ENCODE measurements at regions of chr1 and their contacts with region 1.

Region 1: GRCh38 chr1:117481410-117481809 is 114.2 kb downstream of the MAN1A2 start:
- DNase-seq: no peak
- ATAC-seq: no peak
- H3K4me3 ChIP-seq: no peak overlapping the region
- H3K27ac ChIP-seq: no peak overlapping the region
- H3K4me1 ChIP-seq: no peaks in the 10 kb centered on the region
- H3K27me3 ChIP-seq: no peaks in the 10 kb centered on the region
- CTCF ChIP-seq: no peak
- EP300 ChIP-seq: no peak
- POLR2A ChIP-seq: no peak
- RAD21 ChIP-seq: no peak

Region 2: DNA sequence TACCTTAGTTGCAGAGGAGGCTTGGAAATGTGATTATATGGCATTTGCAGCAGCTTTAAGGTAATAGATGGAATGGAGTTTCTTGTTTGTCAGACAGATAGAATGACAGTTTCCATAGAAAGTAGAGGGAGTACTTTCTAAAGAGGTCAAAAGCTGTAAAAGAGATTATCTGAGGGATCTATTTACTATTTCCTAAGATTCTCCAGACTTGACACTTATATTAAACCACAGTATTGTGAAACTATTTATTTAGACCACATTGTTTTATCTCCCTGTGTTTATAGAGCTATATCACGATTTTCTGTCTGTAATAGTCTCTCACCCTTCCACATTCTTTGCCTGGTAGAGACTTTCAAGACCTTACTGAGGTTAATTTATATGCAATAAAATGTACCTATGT is 47.5 kb before region 1 on chr1:
- CTCF ChIA-PET with region 1: no interaction called
- POLR2A ChIA-PET with region 1: no interaction called
- RAD21 ChIA-PET with region 1: no interaction called
- SMC1A ChIA-PET with region 1: no interaction called
- in situ Hi-C with region 1: no loop called
- intact Hi-C with region 1: loop called (anchors 5 kb)
- DNase-seq: no peak
- ATAC-seq: no peak
- H3K4me3 ChIP-seq: no peak overlapping the region
- H3K27ac ChIP-seq: no peak overlapping the region
- H3K4me1 ChIP-seq: no peaks in the 10 kb centered on the region
- H3K27me3 ChIP-seq: no peaks in the 10 kb centered on the region
- CTCF ChIP-seq: no peak
- EP300 ChIP-seq: no peak
- POLR2A ChIP-seq: no peak
- RAD21 ChIP-seq: no peak

Region 3: GRCh38 chr1:117453958-117454357 is 27.5 kb before region 1 on chr1:
- CTCF ChIA-PET with region 1: no interaction called
- POLR2A ChIA-PET with region 1: no interaction called
- RAD21 ChIA-PET with region 1: no interaction called
- SMC1A ChIA-PET with region 1: no interaction called
- in situ Hi-C with region 1: no loop called
- intact Hi-C with region 1: no loop called
- DNase-seq: no peak
- ATAC-seq: no peak
- H3K4me3 ChIP-seq: no peak overlapping the region
- H3K27ac ChIP-seq: no peak overlapping the region
- H3K4me1 ChIP-seq: no peaks in the 10 kb centered on the region
- H3K27me3 ChIP-seq: no peaks in the 10 kb centered on the region
- CTCF ChIP-seq: no peak
- EP300 ChIP-seq: no peak
- POLR2A ChIP-seq: no peak
- RAD21 ChIP-seq: no peak